A549 (cell line): ENCODE measurements at regions of chr17 and their contacts with region 1.

Region 1: GRCh38 chr17:47831003-47831933 is at the starts of genes LRRC46 and MRPL10:
- DNase-seq: peak; percentile 94 to 99
- ATAC-seq: peak; percentile 90 to 95
- H3K4me3 ChIP-seq: peak within 1 kb of the TSS; percentile 60
- H3K27ac ChIP-seq: peak within 1 kb of the TSS; percentile 83 to 88
- H3K4me1 ChIP-seq: peaks cover 16% of the 10 kb centered on the region
- CTCF ChIP-seq: peak; percentile 55
- EP300 ChIP-seq: no peak
- POLR2A ChIP-seq: peak; percentile 96
- RAD21 ChIP-seq: no peak; a peak in 1 of 5 replicates
- polyA plus RNA-seq, gene LRRC46: 1.7 and 2.7 TPM in 2 replicates
- polyA plus RNA-seq, gene MRPL10: 97.7 and 103 TPM in 2 replicates

Region 2: GRCh38 chr17:47404006-47404405 is 427.3 kb before region 1 on chr17:
- CTCF ChIA-PET with region 1: no interaction called
- POLR2A ChIA-PET with region 1: no interaction called
- DNase-seq: no peak
- ATAC-seq: no peak
- H3K4me3 ChIP-seq: no peak overlapping the region
- H3K27ac ChIP-seq: no peak overlapping the region
- H3K4me1 ChIP-seq: no peaks in the 10 kb centered on the region
- CTCF ChIP-seq: no peak
- EP300 ChIP-seq: no peak
- POLR2A ChIP-seq: no peak
- RAD21 ChIP-seq: no peak

Region 3: GRCh38 chr17:47649153-47649971 is 181.9 kb before region 1 on chr17 and contains the start of gene KPNB1:
- CTCF ChIA-PET with region 1: no interaction called
- POLR2A ChIA-PET with region 1: interaction called, 12 read pairs
- DNase-seq: peak; percentile 97 to 100
- ATAC-seq: peak; percentile 87 to 93
- H3K4me3 ChIP-seq: peak within 1 kb of the TSS; percentile 69
- H3K27ac ChIP-seq: peak within 1 kb of the TSS; percentile 92 to 95
- H3K4me1 ChIP-seq: peaks cover 37% of the 10 kb centered on the region
- CTCF ChIP-seq: no peak
- EP300 ChIP-seq: no peak
- POLR2A ChIP-seq: peak; percentile 71
- RAD21 ChIP-seq: 0 out of 5 replicates have a peak, but pooled peaks of 1 of the 2 experiments have one; percentile 7
- polyA plus RNA-seq, gene KPNB1: 358 and 452 TPM in 2 replicates

Region 4: DNA sequence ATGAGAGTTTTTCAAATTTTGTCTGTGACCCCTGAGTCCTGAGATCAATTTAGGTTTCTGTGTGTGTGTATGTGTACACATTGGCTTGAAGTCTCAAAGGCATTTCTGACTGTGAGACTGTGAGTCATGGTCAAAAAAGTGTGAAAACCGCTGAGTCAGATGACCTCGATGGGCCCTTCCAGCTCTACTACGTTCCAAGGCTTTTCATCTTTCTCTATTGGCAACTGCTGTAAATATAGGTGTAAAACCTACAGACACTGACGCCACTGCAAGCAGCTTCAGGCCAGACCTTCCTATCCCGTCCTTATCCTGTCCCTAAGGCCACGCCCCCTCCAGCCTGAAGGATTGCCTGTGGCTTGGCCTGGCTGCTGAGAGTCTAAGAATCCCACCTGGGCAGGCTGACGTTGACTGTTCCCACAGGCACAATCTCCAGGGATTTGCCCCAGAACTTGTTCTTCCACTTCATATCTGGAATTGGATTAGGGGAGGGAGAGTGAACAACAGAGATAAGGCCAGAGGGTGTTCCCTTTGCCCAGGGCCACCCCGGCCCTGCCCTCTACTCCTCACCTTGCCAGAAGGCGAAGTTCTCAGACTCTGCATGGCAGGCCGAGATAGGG is 21.0 kb before region 1 on chr17:
- CTCF ChIA-PET with region 1: interaction called, 11 read pairs
- POLR2A ChIA-PET with region 1: interaction called, 8 read pairs
- DNase-seq: peak; percentile 75 to 88
- ATAC-seq: peak; percentile 69 to 85
- H3K4me3 ChIP-seq: no peak overlapping the region
- H3K27ac ChIP-seq: peak overlapping the region; percentile 36 to 75; a peak in 4 of 6 replicates
- H3K4me1 ChIP-seq: peaks cover 25% of the 10 kb centered on the region
- CTCF ChIP-seq: no peak
- EP300 ChIP-seq: 0 out of 5 replicates have a peak, but pooled peaks of 1 of the 2 experiments have one; percentile 16
- POLR2A ChIP-seq: no peak
- RAD21 ChIP-seq: no peak

Region 5: DNA sequence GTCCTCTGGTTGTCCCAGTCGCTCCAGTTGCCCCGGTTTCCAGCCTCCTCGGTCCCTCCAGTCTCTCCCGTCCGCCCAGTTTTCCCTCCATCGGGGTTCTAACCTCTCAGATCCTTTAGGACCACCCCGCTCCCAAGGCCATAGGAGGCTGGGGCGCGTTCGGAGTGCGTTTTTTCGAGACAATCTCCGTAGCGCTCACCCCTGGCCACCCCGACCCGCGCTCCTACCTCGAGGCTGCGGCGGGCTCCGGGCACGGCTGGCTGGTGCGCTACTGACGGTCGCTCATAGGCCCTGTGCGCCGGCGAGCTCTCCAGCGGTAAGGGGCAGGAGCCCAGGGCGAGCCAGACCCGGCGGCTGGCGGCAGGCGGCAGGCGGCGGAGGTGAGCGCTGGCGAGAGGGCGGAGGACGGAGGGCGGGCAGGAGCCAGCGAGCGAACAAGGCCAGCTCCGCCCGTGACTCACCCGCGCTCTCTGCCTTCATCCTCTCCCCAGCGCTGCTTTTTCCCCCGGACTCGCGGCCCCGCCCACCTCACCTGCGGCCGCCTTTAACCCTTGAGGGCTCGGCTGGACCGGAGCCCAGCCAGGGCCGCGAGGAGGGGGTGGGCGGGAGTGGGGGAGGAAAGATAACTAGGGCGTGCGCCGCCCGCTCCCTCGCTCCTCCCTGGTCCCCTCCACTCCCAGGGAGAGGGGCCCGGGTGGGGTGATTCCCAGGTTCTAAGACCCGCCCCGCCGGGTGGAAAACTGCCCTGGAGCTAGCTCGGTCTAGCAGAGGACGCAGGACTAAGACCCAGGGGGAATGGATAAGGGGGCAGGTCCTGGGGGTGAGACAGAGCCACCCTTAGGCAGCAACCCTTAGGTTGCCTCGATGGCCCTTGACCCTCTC is 19.7 kb after region 1 on chr17 and contains the start of gene SP6:
- CTCF ChIA-PET with region 1: interaction called, 28 read pairs
- POLR2A ChIA-PET with region 1: interaction called, 3 read pairs
- DNase-seq: peak; percentile 76 to 91
- ATAC-seq: peak; percentile 90 to 95
- H3K4me3 ChIP-seq: peak within 1 kb of the TSS; percentile 50
- H3K27ac ChIP-seq: peak within 1 kb of the TSS; percentile 74 to 91
- H3K4me1 ChIP-seq: peaks cover 16% of the 10 kb centered on the region
- CTCF ChIP-seq: peak; percentile 27; the same call in 2 of the 3 replicates
- EP300 ChIP-seq: no peak
- POLR2A ChIP-seq: peak; percentile 74
- RAD21 ChIP-seq: peak in 1 of 2 experiments; percentile 31; a peak in 1 of 5 replicates
- polyA plus RNA-seq, gene SP6: 0.61 and 0.67 TPM in 2 replicates

Region 6: GRCh38 chr17:47895856-47896671 is 64.8 kb after region 1 on chr17 and contains the start of gene SP2:
- CTCF ChIA-PET with region 1: interaction called, 1,860 read pairs
- POLR2A ChIA-PET with region 1: interaction called, 38 read pairs
- DNase-seq: peak; percentile 100
- ATAC-seq: peak; percentile 88 to 95
- H3K4me3 ChIP-seq: peak within 1 kb of the TSS; percentile 86
- H3K27ac ChIP-seq: peak within 1 kb of the TSS; percentile 95 to 96
- H3K4me1 ChIP-seq: peaks cover 16% of the 10 kb centered on the region; the same call in 2 of the 3 replicates
- CTCF ChIP-seq: no peak
- EP300 ChIP-seq: no peak
- POLR2A ChIP-seq: peak; percentile 91
- RAD21 ChIP-seq: no peak
- polyA plus RNA-seq, gene SP2: 6.2 and 8.0 TPM in 2 replicates